ENCODE measurements at regions of chr9 and their contacts with region 1.

Region 1: DNA sequence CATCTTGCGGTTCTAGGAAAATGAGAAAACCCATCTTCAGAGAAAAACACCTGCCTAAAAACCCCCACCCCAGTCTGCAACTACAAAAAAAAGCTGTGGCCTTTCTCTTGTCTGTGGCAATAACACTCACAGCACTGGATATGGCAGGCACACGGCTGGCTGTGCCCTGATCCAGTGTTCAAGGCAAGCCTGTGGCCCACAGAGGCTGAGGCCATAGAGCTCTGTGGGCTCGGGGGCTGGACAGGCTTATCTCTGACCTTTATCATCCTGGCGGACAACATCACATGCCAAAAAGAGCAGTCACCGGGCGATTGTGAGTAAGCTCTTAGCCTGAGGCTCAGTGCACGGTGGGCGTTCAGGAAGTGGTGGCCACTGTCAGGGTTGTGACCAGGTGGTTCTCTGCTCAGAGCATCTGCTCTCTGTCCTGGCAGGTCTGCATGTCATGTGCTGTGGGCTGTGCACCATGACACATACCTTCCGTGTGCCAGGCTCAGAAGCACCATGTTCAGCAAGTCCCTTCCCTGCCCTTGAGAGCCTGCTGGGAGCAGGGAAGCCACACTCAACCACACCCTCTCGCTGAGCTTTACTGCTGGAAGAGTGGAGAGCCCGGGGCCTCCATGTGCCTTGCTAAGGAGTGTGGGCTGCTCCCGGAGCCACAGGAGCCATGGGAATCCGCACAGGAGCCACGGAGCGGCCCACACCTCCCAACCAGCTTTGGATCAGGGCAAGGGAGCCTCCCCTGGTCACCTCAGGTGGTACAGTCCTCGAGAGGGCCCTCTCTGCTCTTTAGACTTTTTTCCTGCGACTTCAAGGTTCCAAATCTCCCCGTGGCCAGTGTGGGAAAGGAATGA is 34.6 kb upstream of the WDR38 start:
- DNase-seq: peak; percentile 96
- H3K4me3 ChIP-seq: peak overlapping the region in 1 of 3 experiments; percentile 0
- H3K27ac ChIP-seq: peak overlapping the region; percentile 61
- H3K4me1 ChIP-seq: peaks cover 41% of the 10 kb centered on the region
- H3K27me3 ChIP-seq: no peaks in the 10 kb centered on the region
- CTCF ChIP-seq: peak in 1 of 2 donors; percentile 15

Region 2: GRCh38 chr9:124834591-124834990 is 15.9 kb after region 1 on chr9:
- CTCF ChIA-PET with region 1: interaction called, 3 read pairs
- dilution Hi-C with region 1: no loop called
- in situ Hi-C with region 1: no loop called
- intact Hi-C with region 1: loop called (anchors 1 kb)
- DNase-seq: peak; percentile 97
- H3K4me3 ChIP-seq: no peak overlapping the region
- H3K27ac ChIP-seq: peak overlapping the region; percentile 5
- H3K4me1 ChIP-seq: peaks cover 21% of the 10 kb centered on the region
- H3K27me3 ChIP-seq: no peaks in the 10 kb centered on the region
- CTCF ChIP-seq: no peak